Activated naive CD4-positive, alpha-beta T cell treated with anti-CD3 and anti-CD28 coated beads for 36 hours (primary cell): ENCODE measurements at regions of chr18 and their contacts with region 1.

Region 1: GRCh38 chr18:13823707-13824395 is at the start of gene MC5R:
- DNase-seq: peak; percentile 67
- H3K4me3 Mint-ChIP-seq: no peak within 1 kb of the TSS
- H3K27ac Mint-ChIP-seq: no peak within 1 kb of the TSS
- H3K4me1 Mint-ChIP-seq: peaks cover 3% of the 10 kb centered on the region
- H3K27me3 Mint-ChIP-seq: peaks cover 18% of the 10 kb centered on the region
- total RNA-seq, gene MC5R: not detected

Region 2: DNA sequence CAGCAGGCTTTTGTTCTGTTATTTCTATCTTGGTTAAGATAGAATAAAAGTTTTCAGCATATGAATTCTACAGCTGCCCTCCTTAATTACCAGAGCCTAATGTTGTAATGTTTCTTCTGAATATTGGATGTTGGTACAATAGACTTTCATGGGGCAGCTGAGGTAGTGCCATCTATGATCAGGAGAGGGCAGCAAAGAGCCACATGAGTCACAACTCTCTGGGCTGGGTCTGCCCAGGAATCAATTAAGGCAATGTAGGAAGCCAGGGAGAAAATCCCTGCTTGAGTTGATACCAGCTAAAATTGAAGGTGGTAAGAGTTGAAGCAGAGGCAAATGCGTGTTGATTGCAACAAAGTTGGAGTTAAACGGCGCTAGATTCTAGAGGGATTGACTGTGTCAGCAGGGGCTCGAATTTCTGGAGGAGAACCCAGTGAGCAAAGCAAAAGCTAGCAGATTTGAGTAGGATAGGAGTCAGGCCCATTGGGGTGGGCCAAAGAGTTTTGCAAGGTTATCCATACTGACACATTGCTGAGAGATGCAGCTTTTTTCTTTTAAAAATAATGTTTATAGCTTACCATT is 10.5 kb before region 1 on chr18:
- CTCF ChIA-PET with region 1: interaction called, 17 read pairs
- intact Hi-C with region 1: no loop called
- DNase-seq: peak; percentile 75
- H3K4me3 Mint-ChIP-seq: no peak overlapping the region
- H3K27ac Mint-ChIP-seq: no peak overlapping the region
- H3K4me1 Mint-ChIP-seq: no peaks in the 10 kb centered on the region
- H3K27me3 Mint-ChIP-seq: no peaks in the 10 kb centered on the region

Region 3: GRCh38 chr18:13868501-13869271 is 44.8 kb after region 1 on chr18:
- CTCF ChIA-PET with region 1: interaction called, 3 read pairs
- intact Hi-C with region 1: loop called (anchors 5 kb)
- DNase-seq: no peak
- H3K4me3 Mint-ChIP-seq: no peak overlapping the region
- H3K27ac Mint-ChIP-seq: no peak overlapping the region
- H3K4me1 Mint-ChIP-seq: peaks cover 3% of the 10 kb centered on the region
- H3K27me3 Mint-ChIP-seq: peaks cover 52% of the 10 kb centered on the region

Region 4: GRCh38 chr18:13909141-13909940 is 85.5 kb after region 1 on chr18:
- CTCF ChIA-PET with region 1: no interaction called
- intact Hi-C with region 1: loop called (anchors 10 kb)
- DNase-seq: no peak
- H3K4me3 Mint-ChIP-seq: no peak overlapping the region
- H3K27ac Mint-ChIP-seq: no peak overlapping the region
- H3K4me1 Mint-ChIP-seq: no peaks in the 10 kb centered on the region
- H3K27me3 Mint-ChIP-seq: no peaks in the 10 kb centered on the region

Region 5: DNA sequence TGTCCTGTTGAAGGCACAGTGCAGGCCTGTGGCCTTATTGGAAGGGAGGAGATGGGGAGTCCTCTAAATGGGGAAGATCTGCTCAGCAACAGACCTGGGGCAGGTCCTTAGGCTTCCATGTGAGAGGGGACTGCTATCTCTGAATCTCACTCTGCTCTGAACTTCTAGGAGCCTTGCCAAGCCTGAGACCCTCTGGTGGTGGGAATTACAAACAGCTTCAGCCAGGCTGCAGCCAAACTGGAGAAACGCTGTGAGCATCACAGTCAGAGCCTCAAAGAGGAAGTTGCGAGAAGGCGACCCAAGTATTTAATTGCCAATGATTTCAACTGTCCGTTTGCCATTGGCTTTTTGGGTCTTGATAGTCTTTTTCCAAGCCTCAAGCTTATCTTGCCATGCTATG is 158.3 kb after region 1 on chr18:
- CTCF ChIA-PET with region 1: no interaction called
- intact Hi-C with region 1: loop called (anchors 10 kb)
- DNase-seq: no peak
- H3K4me3 Mint-ChIP-seq: no peak overlapping the region
- H3K27ac Mint-ChIP-seq: no peak overlapping the region
- H3K4me1 Mint-ChIP-seq: no peaks in the 10 kb centered on the region
- H3K27me3 Mint-ChIP-seq: peaks cover 16% of the 10 kb centered on the region

Region 6: GRCh38 chr18:14086458-14087231 is 262.8 kb after region 1 on chr18:
- CTCF ChIA-PET with region 1: interaction called, 14 read pairs
- intact Hi-C with region 1: loop called (anchors 1 kb)
- DNase-seq: peak; percentile 22
- H3K4me3 Mint-ChIP-seq: no peak overlapping the region
- H3K27ac Mint-ChIP-seq: no peak overlapping the region
- H3K4me1 Mint-ChIP-seq: no peaks in the 10 kb centered on the region
- H3K27me3 Mint-ChIP-seq: peaks cover 3% of the 10 kb centered on the region

Region 7: GRCh38 chr18:14179305-14179704 is 355.5 kb after region 1 on chr18:
- CTCF ChIA-PET with region 1: no interaction called
- intact Hi-C with region 1: loop called (anchors 10 kb)
- DNase-seq: no peak
- H3K4me3 Mint-ChIP-seq: peak overlapping the region; percentile 86
- H3K27ac Mint-ChIP-seq: no peak overlapping the region
- H3K4me1 Mint-ChIP-seq: peaks cover 4% of the 10 kb centered on the region
- H3K27me3 Mint-ChIP-seq: peaks cover 3% of the 10 kb centered on the region